ENCODE measurements at regions of chrX and their contacts with region 1.

Region 1: GRCh38 chrX:103918581-103919269 is 43.7 kb upstream of the TMSB15B start:
- DNase-seq: peak; percentile 63
- H3K4me3 Mint-ChIP-seq: peak overlapping the region; percentile 91
- H3K27ac Mint-ChIP-seq: peak overlapping the region; percentile 87
- H3K4me1 Mint-ChIP-seq: peaks cover 31% of the 10 kb centered on the region
- H3K27me3 Mint-ChIP-seq: no peaks in the 10 kb centered on the region

Region 2: GRCh38 chrX:103686199-103687072 is 232.3 kb before region 1 on chrX and contains the start of gene MORF4L2:
- CTCF ChIA-PET with region 1: interaction called, 6 read pairs
- POLR2A ChIA-PET with region 1: interaction called, 10 read pairs
- DNase-seq: peak; percentile 90
- H3K4me3 Mint-ChIP-seq: peak within 1 kb of the TSS; percentile 79
- H3K27ac Mint-ChIP-seq: peak within 1 kb of the TSS; percentile 75
- H3K4me1 Mint-ChIP-seq: peaks cover 12% of the 10 kb centered on the region
- H3K27me3 Mint-ChIP-seq: no peaks in the 10 kb centered on the region
- total RNA-seq, gene MORF4L2: 134 to 135 TPM

Region 3: GRCh38 chrX:103932133-103932532 is 13.4 kb after region 1 on chrX:
- CTCF ChIA-PET with region 1: interaction called, 14 read pairs
- POLR2A ChIA-PET with region 1: no interaction called
- DNase-seq: no peak
- H3K4me3 Mint-ChIP-seq: no peak overlapping the region
- H3K27ac Mint-ChIP-seq: no peak overlapping the region
- H3K4me1 Mint-ChIP-seq: no peaks in the 10 kb centered on the region
- H3K27me3 Mint-ChIP-seq: no peaks in the 10 kb centered on the region

Region 4: GRCh38 chrX:103941201-103941975 is 22.7 kb after region 1 on chrX:
- CTCF ChIA-PET with region 1: interaction called, 12 read pairs
- POLR2A ChIA-PET with region 1: no interaction called
- DNase-seq: no peak
- H3K4me3 Mint-ChIP-seq: no peak overlapping the region
- H3K27ac Mint-ChIP-seq: no peak overlapping the region
- H3K4me1 Mint-ChIP-seq: peaks cover 35% of the 10 kb centered on the region
- H3K27me3 Mint-ChIP-seq: no peaks in the 10 kb centered on the region

Measured in activated CD4-positive, alpha-beta memory T cell treated with anti-CD3 and anti-CD28 coated beads, Interleukin-2, amount 10 ng/mL, durations not matched to agents 7 days and 5 days (primary cell).